Heart right ventricle (tissue), 16 donors: ENCODE measurements at regions of chr17 and their contacts with region 1.

Region 1: DNA sequence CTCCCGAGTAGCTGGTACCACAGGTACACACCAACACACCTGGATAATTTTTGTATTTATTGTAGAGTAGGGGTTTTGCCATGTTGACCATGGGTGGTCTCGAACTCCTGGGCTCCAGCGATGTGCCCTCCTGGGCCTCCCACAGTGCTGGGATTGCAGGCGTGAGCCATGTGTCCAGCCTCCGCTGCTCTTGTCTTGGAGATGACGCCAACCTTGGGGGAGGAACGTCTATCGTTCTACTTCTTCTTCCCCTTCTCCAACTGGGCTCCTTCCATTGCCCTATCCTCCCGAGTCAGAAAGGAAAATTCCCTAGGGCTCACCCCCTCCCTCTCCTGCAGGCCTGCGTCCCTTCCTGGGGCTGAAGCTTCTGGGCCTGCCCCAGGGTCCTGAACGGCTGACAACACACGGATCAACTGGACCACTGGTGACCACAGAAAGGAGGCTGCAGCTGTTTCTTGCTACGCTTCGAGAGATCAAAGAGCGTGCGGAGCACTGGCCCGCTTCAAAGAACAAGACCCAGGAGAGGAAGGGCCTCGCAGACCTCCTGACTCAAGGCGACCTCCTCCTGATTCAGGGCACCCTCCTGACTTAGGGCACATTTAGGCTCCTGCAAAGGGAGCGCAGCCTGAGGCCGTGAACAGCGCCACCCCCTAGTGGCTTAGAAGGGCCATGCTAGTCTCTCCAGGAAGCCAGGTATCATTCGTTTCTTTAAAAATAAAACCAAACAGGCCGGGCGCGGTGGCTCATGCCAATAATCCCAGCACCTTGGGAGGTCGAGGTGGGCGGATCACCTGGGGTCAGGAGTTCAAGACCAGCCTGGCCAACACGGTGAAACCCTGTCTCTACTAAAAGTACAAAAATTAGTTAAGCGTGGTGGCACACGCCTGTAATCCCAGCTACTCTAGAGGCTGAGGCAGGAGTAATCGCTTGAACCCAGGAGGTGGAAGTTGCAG is 48.5 kb upstream of the HELZ start:
- DNase-seq: peak; percentile 53 to 67
- ATAC-seq: peak; percentile 50 to 82 (median 69)
- H3K4me3 ChIP-seq: peak overlapping the region in 5 of 10 donors; percentile 3 to 34 (median 14)
- H3K27ac ChIP-seq: peak overlapping the region in 1 of 10 donors; percentile 69
- H3K4me1 ChIP-seq: peaks cover 3 to 32% (median 18%) of the 10 kb centered on the region in 9 donors
- H3K27me3 ChIP-seq: no peaks in the 10 kb centered on the region
- CTCF ChIP-seq: peak; percentile 57 to 89 (median 84)

Region 2: DNA sequence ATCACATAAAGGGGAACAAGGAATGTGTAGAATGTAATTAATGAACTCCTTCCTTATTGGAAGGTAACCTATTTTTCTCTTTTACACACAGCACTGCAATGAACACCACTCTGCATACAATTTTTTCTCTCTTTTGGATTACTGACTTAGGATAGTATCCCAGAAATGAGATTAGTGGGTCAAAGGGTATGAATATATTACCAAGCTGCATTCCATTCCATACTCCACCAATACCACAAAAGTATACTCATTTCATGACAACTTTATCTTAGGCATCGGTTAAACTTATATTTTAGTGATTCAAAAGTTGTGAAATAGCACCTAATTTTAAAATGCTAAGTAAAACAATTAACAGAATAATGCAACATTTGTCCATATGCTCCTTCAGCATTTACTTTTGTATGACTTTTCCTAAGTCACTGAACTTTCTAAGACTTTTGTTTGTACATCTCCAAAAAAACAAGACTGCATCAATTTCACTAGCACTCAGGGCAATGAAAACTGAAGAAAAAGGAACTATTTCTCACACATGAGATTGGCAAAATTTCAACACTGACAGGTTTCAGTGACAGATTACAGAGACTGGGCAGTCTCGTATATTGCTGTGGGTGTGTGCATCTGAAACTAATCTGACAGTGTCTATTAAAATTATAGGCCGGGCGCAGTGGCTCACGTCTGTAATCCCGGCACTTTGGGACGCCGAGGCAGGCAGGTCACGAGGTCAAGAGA is 80.7 kb before region 1 on chr17:
- intact Hi-C with region 1: loop called in 1 of 10 experiments (anchors 10 kb)
- DNase-seq: no peak
- ATAC-seq: no peak
- H3K4me3 ChIP-seq: no peak overlapping the region
- H3K27ac ChIP-seq: no peak overlapping the region
- H3K4me1 ChIP-seq: peaks cover 0 to 48% (median 27%) of the 10 kb centered on the region in 9 donors
- H3K27me3 ChIP-seq: no peaks in the 10 kb centered on the region
- CTCF ChIP-seq: no peak

Region 3: DNA sequence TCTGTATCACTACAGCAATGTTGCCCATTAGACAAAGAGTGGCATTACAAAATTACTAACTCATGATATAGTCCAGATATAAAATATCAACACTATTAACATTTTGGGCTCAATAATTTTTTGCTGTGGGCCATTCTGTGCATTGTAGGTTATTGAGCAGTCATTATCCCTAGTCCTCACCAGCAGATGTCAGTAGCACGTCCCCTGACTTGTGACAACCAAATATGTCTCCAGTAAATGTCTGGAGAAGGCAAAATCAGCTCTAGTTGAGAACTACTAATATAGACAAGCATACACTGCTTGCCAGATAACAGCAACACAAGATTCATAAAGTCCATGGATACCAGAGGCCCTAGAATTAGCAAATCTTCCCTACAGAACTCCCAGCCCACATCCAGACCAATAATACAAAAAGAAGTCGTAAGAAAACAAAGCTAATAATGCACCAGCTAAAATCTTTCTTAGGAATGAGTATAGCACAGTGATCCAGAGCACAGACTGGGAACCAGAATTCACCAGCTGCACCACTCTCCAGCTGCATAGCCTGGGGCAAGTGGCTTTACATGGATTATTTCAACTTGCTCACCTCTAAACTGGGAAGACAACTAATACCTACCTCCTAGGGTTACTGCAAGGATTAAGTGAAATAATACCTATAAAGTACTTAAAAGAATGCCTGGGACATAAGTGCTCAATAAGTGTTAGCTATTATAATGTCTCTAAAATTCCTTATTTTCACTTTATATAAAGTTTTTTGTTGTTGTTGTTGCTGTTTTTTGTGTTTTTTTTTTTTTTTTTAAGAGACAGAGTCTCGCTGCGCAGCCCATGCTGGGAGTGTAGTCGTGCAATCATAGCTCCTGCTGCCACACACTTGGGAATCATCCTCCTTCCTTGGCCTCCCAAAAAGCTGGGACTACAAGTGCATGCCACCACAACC is 72.2 kb before region 1 on chr17:
- intact Hi-C with region 1: loop called (anchors 1 to 10 kb)
- DNase-seq: peak in 1 of 2 donors; percentile 42
- ATAC-seq: peak in 6 of 8 donors; percentile 58 to 81 (median 78)
- H3K4me3 ChIP-seq: no peak overlapping the region
- H3K27ac ChIP-seq: no peak overlapping the region
- H3K4me1 ChIP-seq: peaks cover 0 to 50% (median 25%) of the 10 kb centered on the region in 9 donors
- H3K27me3 ChIP-seq: no peaks in the 10 kb centered on the region
- CTCF ChIP-seq: peak; percentile 9 to 80 (median 62)

Region 4: GRCh38 chr17:67245073-67245755 is 48.3 kb before region 1 on chr17 and contains the start of gene HELZ:
- intact Hi-C with region 1: loop called in 3 of 10 experiments (anchors 5 to 10 kb)
- DNase-seq: peak; percentile 80 to 81
- ATAC-seq: peak; percentile 87 to 92 (median 90)
- H3K4me3 ChIP-seq: peak within 1 kb of the TSS; percentile 76 to 100 (median 98)
- H3K27ac ChIP-seq: peak within 1 kb of the TSS; percentile 65 to 97 (median 92)
- H3K4me1 ChIP-seq: peaks cover 5 to 55% (median 46%) of the 10 kb centered on the region in 9 donors
- H3K27me3 ChIP-seq: no peaks in the 10 kb centered on the region
- CTCF ChIP-seq: no peak
- total RNA-seq, gene HELZ: 27.4 to 50.3 (median 41.7) TPM